ENCODE measurements at regions of chr14 and their contacts with region 1.

Region 1: GRCh38 chr14:37903343-37904191 is 304.1 kb upstream of the SSTR1 start:
- DNase-seq: peak; percentile 72
- H3K4me3 ChIP-seq: peak overlapping the region; percentile 54
- H3K27ac ChIP-seq: no peak overlapping the region
- H3K4me1 ChIP-seq: peaks cover 37% of the 10 kb centered on the region
- H3K27me3 ChIP-seq: no peaks in the 10 kb centered on the region

Region 2: DNA sequence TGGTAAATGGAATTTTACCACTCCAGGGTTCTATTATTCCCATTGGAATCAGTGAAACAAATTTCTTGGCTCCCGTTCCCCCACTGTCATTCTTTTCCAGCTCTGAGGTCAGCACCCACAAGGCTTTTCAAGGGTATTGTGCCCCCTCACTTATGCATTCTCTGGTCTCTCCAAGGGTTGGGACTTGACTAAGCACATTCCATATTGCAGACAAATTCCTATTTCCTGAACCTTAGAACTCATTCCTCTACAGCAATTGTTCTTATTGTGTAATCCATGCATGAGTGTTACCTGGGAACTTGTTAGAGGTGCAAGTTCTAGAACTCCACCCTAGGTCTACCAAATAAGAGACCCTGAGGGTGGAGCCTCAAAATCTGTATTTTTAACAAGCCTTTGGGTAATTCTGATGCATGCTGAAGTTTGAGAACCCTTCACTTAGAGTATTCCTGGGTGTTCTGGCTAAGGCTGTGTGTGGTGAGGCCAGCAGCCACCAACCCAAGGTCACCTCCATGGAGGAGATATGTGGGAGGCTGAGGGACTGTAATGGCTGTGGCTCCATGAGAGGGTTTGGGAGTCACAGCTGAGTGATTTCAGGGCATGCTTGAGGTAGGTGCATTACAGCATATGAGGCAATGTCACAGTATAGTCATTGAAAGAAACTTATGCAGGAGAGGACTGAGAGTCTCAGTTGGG is 157.3 kb before region 1 on chr14:
- in situ Hi-C with region 1: no loop called
- DNase-seq: no peak
- H3K4me3 ChIP-seq: no peak overlapping the region
- H3K27ac ChIP-seq: no peak overlapping the region
- H3K4me1 ChIP-seq: no peaks in the 10 kb centered on the region
- H3K27me3 ChIP-seq: no peaks in the 10 kb centered on the region

Region 3: GRCh38 chr14:38208618-38209562 is 305.3 kb after region 1 on chr14:
- in situ Hi-C with region 1: loop called (anchors 10 kb)
- DNase-seq: peak; percentile 90
- H3K4me3 ChIP-seq: peak overlapping the region; percentile 89
- H3K27ac ChIP-seq: peak overlapping the region; percentile 63
- H3K4me1 ChIP-seq: peaks cover 40% of the 10 kb centered on the region
- H3K27me3 ChIP-seq: no peaks in the 10 kb centered on the region

Region 4: DNA sequence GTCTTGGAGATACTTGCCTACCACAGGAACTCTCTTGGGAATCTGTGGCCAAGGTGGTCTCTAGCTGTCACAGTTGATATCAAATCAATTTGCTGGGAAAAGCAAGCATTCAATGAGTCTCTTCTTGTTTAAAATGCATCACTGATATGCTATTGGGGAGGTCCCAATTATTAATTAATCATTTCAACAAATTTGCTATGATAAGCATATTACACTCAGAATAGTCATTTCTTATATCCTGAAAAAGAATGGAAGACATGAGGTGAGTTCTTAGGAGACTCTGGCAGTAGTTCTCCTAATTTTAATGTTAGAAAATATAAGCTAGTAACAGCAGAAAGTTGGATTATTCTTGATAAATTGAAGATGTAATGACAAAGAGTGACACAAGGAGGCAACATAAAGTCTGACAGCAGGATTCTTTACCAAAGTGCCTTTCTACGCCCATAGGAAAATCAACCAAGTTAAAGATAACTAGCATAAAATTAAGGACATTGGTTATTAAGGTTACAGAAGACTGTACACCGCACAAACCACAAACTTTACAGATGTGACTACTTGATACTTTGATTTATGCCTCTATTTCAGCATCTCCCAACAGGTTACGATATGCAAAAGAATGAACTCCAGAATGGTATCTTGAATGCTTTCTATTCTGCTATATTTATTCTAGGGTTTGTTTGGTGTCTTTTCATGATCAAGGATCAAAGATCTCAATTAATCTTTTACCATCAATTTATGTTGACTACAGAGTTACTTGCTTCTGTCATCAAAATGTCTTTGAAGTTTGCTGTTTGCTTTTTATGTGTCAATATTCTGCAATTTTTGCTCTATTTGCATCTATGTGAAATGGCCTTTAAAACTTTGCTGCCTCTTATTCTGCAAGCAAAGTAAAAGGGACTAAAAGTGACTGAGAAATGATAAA is 701.9 kb after region 1 on chr14:
- in situ Hi-C with region 1: loop called (anchors 10 kb)
- DNase-seq: peak; percentile 23
- H3K4me3 ChIP-seq: no peak overlapping the region
- H3K27ac ChIP-seq: no peak overlapping the region
- H3K4me1 ChIP-seq: peaks cover under 1% of the 10 kb centered on the region; the same call in 1 of the 2 replicates
- H3K27me3 ChIP-seq: no peaks in the 10 kb centered on the region

Region 5: GRCh38 chr14:38721822-38722431 is 818.4 kb after region 1 on chr14:
- in situ Hi-C with region 1: loop called (anchors 10 kb)
- DNase-seq: peak; percentile 68
- H3K4me3 ChIP-seq: no peak overlapping the region
- H3K27ac ChIP-seq: no peak overlapping the region
- H3K4me1 ChIP-seq: no peaks in the 10 kb centered on the region
- H3K27me3 ChIP-seq: no peaks in the 10 kb centered on the region

Region 6: GRCh38 chr14:38867561-38868150 is 964.1 kb after region 1 on chr14:
- in situ Hi-C with region 1: loop called (anchors 10 kb)
- DNase-seq: peak; percentile 84
- H3K4me3 ChIP-seq: no peak overlapping the region
- H3K27ac ChIP-seq: no peak overlapping the region
- H3K4me1 ChIP-seq: no peaks in the 10 kb centered on the region
- H3K27me3 ChIP-seq: no peaks in the 10 kb centered on the region

Region 7: GRCh38 chr14:39015360-39015961 is 1111.9 kb after region 1 on chr14:
- in situ Hi-C with region 1: loop called (anchors 25 kb)
- DNase-seq: peak; percentile 71
- H3K4me3 ChIP-seq: no peak overlapping the region
- H3K27ac ChIP-seq: no peak overlapping the region
- H3K4me1 ChIP-seq: peaks cover 8% of the 10 kb centered on the region; the same call in 1 of the 2 replicates
- H3K27me3 ChIP-seq: no peaks in the 10 kb centered on the region

Measured in GM23248 (cell line).